Gastrocnemius medialis (tissue), 4 donors: ENCODE measurements at regions of chr12 and their contacts with region 1.

Region 1: DNA sequence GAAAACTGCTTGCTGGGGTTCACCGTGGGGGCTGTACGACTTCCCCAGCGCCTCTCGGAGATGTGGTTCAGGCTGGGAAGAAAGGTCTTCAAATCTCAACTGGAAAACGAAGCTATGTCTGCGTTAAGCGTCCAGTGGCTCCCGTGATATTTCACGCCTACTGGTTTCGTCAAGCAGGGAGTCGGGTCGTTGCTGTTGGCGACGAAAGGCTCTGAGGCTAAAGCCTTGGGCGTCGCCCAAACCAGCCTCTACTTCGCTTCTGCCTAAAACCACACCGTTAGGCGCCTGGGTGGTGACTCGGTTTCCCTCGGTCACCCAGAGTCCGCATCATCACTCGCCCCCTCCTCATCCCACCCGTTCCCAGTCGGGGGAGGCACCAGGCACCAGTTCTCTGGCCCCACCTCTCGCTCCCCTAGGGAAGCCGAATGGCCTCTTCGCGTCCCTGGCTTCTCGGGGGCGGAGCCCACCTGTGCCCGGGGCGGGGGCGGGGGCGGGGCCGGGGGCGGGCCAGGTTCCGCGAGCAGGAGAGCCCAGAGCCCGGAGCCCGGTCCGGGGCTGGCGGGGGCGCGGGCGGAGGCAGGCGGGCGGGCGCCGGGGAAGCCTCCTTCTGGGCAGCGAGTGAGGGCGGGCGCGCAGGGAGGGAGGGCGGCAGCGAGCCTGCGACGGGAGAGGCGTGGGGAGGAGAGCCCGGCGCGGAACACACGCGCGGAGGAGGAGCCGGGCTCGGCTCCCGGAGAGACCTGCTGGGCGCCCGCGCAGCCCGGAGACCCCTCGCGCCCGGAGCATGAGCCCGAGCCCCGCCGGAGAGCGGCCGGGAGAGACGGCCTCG is at the start of gene B4GALNT3:
- DNase-seq: no peak
- ATAC-seq: peak; percentile 11 to 34
- H3K4me3 ChIP-seq: peak within 1 kb of the TSS; percentile 53 to 60 (median 56)
- H3K27ac ChIP-seq: peak within 1 kb of the TSS in 2 of 4 donors; percentile 40 to 44
- H3K4me1 ChIP-seq: peaks cover 2 to 13% of the 10 kb centered on the region in 2 donors
- H3K27me3 ChIP-seq: peaks cover 0 to 19% (median 19%) of the 10 kb centered on the region in 3 donors
- CTCF ChIP-seq: no peak
- POLR2A ChIP-seq: peak in 1 of 2 donors; percentile 57
- total RNA-seq, gene B4GALNT3: 0.20 to 1.9 (median 0.82) TPM

Region 2: DNA sequence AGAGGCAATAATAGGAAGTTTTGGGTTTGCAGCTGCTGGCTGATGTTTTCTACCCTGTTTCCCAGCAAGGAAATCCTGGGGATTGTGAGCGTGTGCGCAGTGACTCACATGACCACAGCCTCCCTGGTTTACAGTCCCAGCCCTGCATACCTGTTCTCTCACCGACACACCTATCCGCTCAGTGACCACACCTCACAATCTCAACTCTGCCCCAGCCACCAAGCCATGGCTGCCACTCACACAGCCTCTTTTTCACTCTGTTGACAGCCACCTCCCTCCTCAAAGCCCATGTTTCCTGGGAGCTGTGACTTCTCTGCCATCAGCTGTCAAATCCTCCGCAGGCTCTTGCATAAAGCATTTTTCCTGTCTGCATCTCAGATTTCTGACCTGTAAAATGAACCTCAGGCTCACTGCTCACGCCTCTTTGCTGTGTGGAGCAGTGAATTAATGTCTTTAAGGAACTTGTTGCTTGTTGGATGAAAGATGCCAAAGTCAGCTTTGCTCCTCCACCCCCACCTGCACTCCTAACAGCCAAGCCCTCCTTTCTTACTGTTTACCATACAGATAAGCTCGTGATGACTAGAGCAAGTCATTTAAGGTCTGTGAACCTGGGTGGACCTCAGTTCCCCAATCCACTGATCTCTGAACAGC is 43.6 kb after region 1 on chr12:
- in situ Hi-C with region 1: no loop called
- intact Hi-C with region 1: loop called (anchors 5 kb)
- DNase-seq: peak in 1 of 2 donors; percentile 27
- ATAC-seq: peak; percentile 71 to 81
- H3K4me3 ChIP-seq: no peak overlapping the region
- H3K27ac ChIP-seq: peak overlapping the region; percentile 22 to 75 (median 48)
- H3K4me1 ChIP-seq: peaks cover 8 to 26% of the 10 kb centered on the region in 2 donors
- H3K27me3 ChIP-seq: no peaks in the 10 kb centered on the region
- CTCF ChIP-seq: no peak
- POLR2A ChIP-seq: no peak

Region 3: DNA sequence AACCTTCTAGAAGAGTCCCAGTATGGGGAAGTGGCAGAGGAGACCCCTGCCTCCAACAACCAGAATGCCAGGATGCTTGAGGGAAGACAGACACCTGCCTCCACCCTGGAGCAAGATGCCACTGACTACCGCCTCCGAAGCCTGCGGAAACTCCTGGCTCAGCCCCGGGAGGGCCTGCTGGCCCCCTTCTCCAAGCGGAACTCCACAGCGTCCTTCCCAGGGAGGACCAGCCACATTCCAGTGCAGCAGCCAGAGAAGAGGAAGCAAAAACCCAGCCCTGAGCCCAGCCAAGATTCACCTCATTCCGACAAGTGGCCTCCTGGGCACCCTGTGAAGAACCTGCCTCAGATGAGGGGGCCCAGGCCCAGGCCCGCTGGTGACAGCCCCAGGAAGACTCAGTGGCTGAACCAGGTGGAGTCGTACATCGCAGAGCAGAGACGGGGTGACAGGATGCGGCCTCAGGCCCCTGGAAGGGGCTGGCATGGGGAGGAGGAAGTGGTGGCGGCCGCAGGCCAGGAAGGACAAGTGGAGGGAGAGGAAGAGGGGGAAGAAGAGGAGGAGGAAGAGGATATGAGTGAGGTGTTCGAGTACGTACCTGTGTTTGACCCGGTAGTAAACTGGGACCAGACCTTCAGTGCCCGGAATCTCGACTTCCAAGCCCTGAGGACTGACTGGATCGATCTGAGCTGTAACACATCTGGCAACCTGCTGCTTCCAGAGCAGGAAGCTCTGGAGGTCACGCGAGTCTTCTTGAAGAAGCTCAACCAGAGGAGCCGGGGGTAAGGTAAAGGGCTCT is 93.8 kb after region 1 on chr12:
- in situ Hi-C with region 1: loop called in 1 of 4 experiments (anchors 5 kb)
- intact Hi-C with region 1: no loop called
- DNase-seq: no peak
- ATAC-seq: no peak
- H3K4me3 ChIP-seq: no peak overlapping the region
- H3K27ac ChIP-seq: no peak overlapping the region
- H3K4me1 ChIP-seq: peaks cover 13 to 16% of the 10 kb centered on the region in 2 donors
- H3K27me3 ChIP-seq: no peaks in the 10 kb centered on the region
- CTCF ChIP-seq: no peak
- POLR2A ChIP-seq: no peak

Region 4: DNA sequence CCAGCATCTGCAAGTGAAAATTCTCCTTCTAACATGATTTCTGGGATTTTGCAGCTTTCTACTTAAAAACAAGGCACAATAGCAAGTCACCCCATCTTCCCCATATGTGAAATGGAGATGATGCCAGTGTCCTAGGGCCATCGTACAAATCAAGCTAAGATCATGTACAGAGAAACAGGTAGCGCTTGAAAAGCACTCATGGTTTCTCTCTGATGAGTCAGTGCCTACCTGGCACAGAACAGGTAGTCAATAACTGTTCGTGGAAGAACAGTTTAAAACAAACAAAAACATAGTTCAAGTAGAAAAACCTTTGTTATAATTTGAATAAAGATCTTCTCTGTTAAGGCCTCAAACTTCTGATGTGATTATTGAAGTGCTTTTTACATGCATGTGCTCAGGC is 442.9 kb after region 1 on chr12:
- in situ Hi-C with region 1: no loop called
- intact Hi-C with region 1: no loop called
- DNase-seq: no peak
- ATAC-seq: no peak
- H3K4me3 ChIP-seq: no peak overlapping the region
- H3K27ac ChIP-seq: no peak overlapping the region
- H3K4me1 ChIP-seq: no peaks in the 10 kb centered on the region
- H3K27me3 ChIP-seq: no peaks in the 10 kb centered on the region
- CTCF ChIP-seq: no peak
- POLR2A ChIP-seq: no peak